Uterus (tissue), 4 donors: ENCODE measurements at regions of chr9 and their contacts with region 1.

Region 1: DNA sequence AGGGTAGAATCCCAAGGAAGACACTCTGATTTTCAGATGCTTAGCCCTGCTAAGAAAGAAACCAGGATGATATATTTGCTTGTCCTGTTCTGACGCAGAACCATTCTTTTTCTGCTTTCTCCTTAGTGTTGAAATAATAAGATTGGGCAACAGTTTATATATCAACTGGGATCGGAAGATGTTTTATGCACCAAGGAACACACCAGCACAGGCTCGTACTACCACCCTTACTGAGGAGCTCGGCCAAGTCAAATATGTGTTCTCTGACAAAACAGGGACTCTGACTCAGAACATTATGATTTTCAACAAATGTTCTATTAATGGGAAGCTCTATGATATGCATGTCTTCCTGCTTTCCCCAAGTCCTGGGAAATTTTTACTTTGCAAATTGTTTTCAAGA is 19.0 kb upstream of the RUSC2 start:
- DNase-seq: peak in 1 of 2 donors; percentile 69
- H3K4me3 ChIP-seq: no peak overlapping the region
- H3K27ac ChIP-seq: peak overlapping the region in 1 of 2 donors; percentile 48
- H3K4me1 ChIP-seq: no peaks in the 10 kb centered on the region
- H3K27me3 ChIP-seq: no peaks in the 10 kb centered on the region
- CTCF ChIP-seq: no peak
- POLR2A ChIP-seq: no peak

Region 2: GRCh38 chr9:35258676-35259474 is 212.0 kb before region 1 on chr9:
- intact Hi-C with region 1: loop called (anchors 10 kb)
- DNase-seq: peak; percentile 70 to 74
- H3K4me3 ChIP-seq: no peak overlapping the region
- H3K27ac ChIP-seq: no peak overlapping the region
- H3K4me1 ChIP-seq: no peaks in the 10 kb centered on the region
- H3K27me3 ChIP-seq: no peaks in the 10 kb centered on the region
- CTCF ChIP-seq: peak; percentile 42 to 74 (median 68)
- POLR2A ChIP-seq: no peak